ENCODE measurements at regions of chr12 and their contacts with region 1.

Region 1: DNA sequence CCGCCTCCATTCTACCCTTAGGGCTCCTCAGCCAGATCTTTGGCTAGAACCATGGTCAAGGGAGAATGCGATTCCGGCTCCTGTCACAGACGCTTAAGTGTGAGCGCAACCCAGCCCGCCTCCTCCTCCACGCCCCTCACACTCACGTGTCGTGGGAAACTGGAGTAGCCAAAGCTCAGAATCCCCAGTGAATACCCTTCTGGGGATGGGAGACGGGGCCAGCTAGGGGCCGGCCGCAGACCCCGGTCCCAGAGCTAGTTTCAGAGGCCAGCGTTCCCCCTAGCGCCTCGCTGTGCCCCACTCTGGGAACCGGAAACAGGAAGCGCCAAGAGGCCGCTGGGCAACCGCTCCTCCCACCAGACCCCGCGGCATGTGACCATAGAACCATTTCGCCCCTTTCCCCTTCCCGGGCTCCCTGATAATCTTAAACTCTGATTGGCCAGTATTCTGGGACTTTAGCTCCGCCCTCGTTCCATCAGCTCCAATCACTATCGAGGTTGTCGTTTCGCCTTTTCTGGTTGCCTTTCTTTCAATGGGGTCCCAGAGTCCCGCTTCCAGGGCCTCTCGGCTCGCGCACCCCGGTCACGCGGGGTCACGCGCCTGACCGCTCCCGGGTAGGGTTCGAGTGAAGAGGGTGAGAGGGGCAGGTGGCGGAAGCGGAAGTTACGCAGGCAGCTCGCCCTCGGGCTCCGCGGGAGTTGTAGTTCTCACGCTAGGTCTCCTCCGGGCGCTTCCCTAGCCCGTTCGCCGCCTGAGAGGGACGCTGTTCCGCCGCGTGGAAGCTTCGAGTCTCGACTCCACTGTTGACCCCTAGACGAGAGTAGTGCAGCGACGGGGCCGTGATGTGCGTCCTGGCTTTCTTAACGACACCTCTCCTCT is at the start of gene M6PR:
- DNase-seq: peak; percentile 93
- H3K4me3 Mint-ChIP-seq: peak within 1 kb of the TSS; percentile 99
- H3K27ac Mint-ChIP-seq: peak within 1 kb of the TSS; percentile 92
- H3K4me1 Mint-ChIP-seq: peaks cover 65% of the 10 kb centered on the region
- H3K27me3 Mint-ChIP-seq: no peaks in the 10 kb centered on the region
- total RNA-seq, gene M6PR: 181 to 224 TPM

Region 2: GRCh38 chr12:8692573-8692972 is 257.0 kb before region 1 on chr12:
- CTCF ChIA-PET with region 1: no interaction called
- POLR2A ChIA-PET with region 1: no interaction called
- DNase-seq: no peak
- H3K4me3 Mint-ChIP-seq: no peak overlapping the region
- H3K27ac Mint-ChIP-seq: no peak overlapping the region
- H3K4me1 Mint-ChIP-seq: peaks cover 9% of the 10 kb centered on the region
- H3K27me3 Mint-ChIP-seq: peaks cover 31% of the 10 kb centered on the region

Region 3: GRCh38 chr12:8905546-8905945 is 44.0 kb before region 1 on chr12:
- CTCF ChIA-PET with region 1: no interaction called
- POLR2A ChIA-PET with region 1: no interaction called
- DNase-seq: no peak
- H3K4me3 Mint-ChIP-seq: no peak overlapping the region
- H3K27ac Mint-ChIP-seq: no peak overlapping the region
- H3K4me1 Mint-ChIP-seq: peaks cover 9% of the 10 kb centered on the region
- H3K27me3 Mint-ChIP-seq: peaks cover 8% of the 10 kb centered on the region

Region 4: GRCh38 chr12:9039397-9039977 is 89.9 kb after region 1 on chr12:
- CTCF ChIA-PET with region 1: interaction called, 19 read pairs
- POLR2A ChIA-PET with region 1: no interaction called
- DNase-seq: peak; percentile 47
- H3K4me3 Mint-ChIP-seq: no peak overlapping the region
- H3K27ac Mint-ChIP-seq: no peak overlapping the region
- H3K4me1 Mint-ChIP-seq: peaks cover 30% of the 10 kb centered on the region
- H3K27me3 Mint-ChIP-seq: peaks cover 2% of the 10 kb centered on the region

Region 5: DNA sequence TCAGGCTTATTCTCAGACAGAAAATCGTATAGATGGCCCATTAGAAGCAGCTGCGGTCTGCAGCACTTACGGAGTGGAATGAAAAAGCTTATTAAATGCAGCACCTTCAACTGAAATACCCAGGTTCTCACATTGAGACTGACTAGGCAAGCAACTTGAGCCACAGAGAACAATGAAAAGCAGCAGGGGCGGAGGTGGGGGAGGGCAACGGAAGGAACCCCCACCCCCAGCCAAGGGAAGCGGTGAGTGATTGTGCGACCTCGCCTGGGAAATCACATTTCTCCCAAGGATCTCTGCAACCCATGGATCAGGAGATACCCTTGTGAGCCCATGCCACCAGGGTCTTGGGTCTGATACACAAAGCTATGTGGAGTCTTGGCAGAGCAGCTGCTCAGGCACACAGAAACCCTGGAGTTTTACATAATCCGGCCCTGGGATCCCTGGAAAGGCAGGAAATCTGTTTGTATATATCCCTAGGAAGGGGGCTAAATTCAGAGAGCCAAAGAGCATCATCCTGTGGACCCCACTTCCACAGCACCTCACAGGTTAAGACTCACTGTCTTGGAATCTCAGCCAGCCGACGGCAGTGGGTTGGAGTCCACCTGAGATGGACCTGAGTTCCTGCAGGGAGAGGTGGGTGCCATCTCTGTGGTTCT is 220.5 kb after region 1 on chr12:
- CTCF ChIA-PET with region 1: no interaction called
- POLR2A ChIA-PET with region 1: no interaction called
- DNase-seq: no peak
- H3K4me3 Mint-ChIP-seq: no peak overlapping the region
- H3K27ac Mint-ChIP-seq: no peak overlapping the region
- H3K4me1 Mint-ChIP-seq: no peaks in the 10 kb centered on the region
- H3K27me3 Mint-ChIP-seq: peaks cover 4% of the 10 kb centered on the region

Measured in activated CD4-positive, alpha-beta T cell treated with anti-CD3 and anti-CD28 coated beads, Interleukin-2, amount 10 ng/mL, durations not matched to agents 7 days and 5 days (primary cell).